Activated CD4-positive, alpha-beta memory T cell treated with anti-CD3 and anti-CD28 coated beads for 36 hours (primary cell): ENCODE measurements at regions of chr2 and their contacts with region 1.

Region 1: GRCh38 chr2:117814417-117815264 is at the start of gene DDX18:
- DNase-seq: peak; percentile 98
- H3K4me3 Mint-ChIP-seq: peak within 1 kb of the TSS; percentile 92
- H3K27ac Mint-ChIP-seq: peak within 1 kb of the TSS; percentile 95
- H3K4me1 Mint-ChIP-seq: peaks cover 35% of the 10 kb centered on the region
- H3K27me3 Mint-ChIP-seq: no peaks in the 10 kb centered on the region
- total RNA-seq, gene DDX18: 118 to 124 TPM

Region 2: DNA sequence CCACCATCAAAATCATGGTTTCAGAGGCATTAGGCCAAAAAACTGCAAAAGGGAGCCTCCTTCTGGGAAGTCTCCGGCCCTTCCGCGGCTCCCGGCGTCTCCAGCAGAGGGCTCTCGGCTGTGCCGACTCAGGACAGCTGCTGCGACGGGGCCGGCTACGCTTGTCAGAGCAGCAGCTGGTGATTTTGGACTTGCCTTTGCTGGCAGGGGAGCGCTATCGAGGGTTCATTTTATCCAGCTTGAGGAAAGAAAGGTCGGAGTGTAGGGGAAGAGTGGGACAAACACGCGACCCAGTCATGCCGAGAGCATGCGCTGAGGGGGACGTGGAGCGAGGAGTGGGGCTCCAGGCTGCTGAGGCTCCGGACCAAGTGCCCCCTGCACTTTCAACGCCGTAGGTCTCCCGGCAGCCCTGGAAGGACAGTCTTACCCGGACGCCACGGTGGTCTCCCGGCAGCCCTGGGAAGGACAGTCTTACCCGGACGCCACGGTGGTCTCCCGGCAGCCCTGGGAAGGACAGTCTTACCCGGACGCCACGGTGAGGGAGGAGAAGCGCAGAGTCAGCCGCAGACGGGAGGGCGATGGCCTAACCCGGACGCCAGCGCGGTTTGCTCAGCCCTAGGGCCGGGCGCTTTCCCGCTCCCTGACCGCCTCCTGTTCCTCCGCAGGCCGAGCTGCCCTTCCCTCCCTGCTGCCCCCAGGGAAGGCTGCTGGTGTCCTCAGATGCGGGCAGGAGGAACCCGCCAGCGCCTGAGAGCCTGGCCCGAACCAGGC is 21.5 kb after region 1 on chr2:
- CTCF ChIA-PET with region 1: interaction called, 17 read pairs
- POLR2A ChIA-PET with region 1: interaction called, 4 read pairs
- intact Hi-C with region 1: loop called (anchors 1 kb)
- DNase-seq: peak; percentile 68
- H3K4me3 Mint-ChIP-seq: peak overlapping the region; percentile 46
- H3K27ac Mint-ChIP-seq: no peak overlapping the region
- H3K4me1 Mint-ChIP-seq: peaks cover 13% of the 10 kb centered on the region
- H3K27me3 Mint-ChIP-seq: no peaks in the 10 kb centered on the region

Region 3: GRCh38 chr2:117856415-117857210 is 42.0 kb after region 1 on chr2:
- CTCF ChIA-PET with region 1: no interaction called
- POLR2A ChIA-PET with region 1: no interaction called
- intact Hi-C with region 1: no loop called
- DNase-seq: no peak
- H3K4me3 Mint-ChIP-seq: no peak overlapping the region
- H3K27ac Mint-ChIP-seq: no peak overlapping the region
- H3K4me1 Mint-ChIP-seq: no peaks in the 10 kb centered on the region
- H3K27me3 Mint-ChIP-seq: peaks cover 36% of the 10 kb centered on the region

Region 4: GRCh38 chr2:118013724-118014491 is 199.3 kb after region 1 on chr2 and contains the start of gene CCDC93:
- CTCF ChIA-PET with region 1: interaction called, 19 read pairs
- POLR2A ChIA-PET with region 1: interaction called, 5 read pairs
- intact Hi-C with region 1: loop called (anchors 1 kb)
- DNase-seq: peak; percentile 90
- H3K4me3 Mint-ChIP-seq: peak within 1 kb of the TSS; percentile 92
- H3K27ac Mint-ChIP-seq: peak within 1 kb of the TSS; percentile 80
- H3K4me1 Mint-ChIP-seq: peaks cover 36% of the 10 kb centered on the region
- H3K27me3 Mint-ChIP-seq: peaks cover 3% of the 10 kb centered on the region
- total RNA-seq, gene CCDC93: 24.9 to 27.3 TPM

Region 5: GRCh38 chr2:118112771-118113334 is 298.2 kb after region 1 on chr2:
- CTCF ChIA-PET with region 1: no interaction called
- POLR2A ChIA-PET with region 1: no interaction called
- intact Hi-C with region 1: no loop called
- DNase-seq: no peak
- H3K4me3 Mint-ChIP-seq: no peak overlapping the region
- H3K27ac Mint-ChIP-seq: no peak overlapping the region
- H3K4me1 Mint-ChIP-seq: peaks cover 7% of the 10 kb centered on the region
- H3K27me3 Mint-ChIP-seq: no peaks in the 10 kb centered on the region

Region 6: DNA sequence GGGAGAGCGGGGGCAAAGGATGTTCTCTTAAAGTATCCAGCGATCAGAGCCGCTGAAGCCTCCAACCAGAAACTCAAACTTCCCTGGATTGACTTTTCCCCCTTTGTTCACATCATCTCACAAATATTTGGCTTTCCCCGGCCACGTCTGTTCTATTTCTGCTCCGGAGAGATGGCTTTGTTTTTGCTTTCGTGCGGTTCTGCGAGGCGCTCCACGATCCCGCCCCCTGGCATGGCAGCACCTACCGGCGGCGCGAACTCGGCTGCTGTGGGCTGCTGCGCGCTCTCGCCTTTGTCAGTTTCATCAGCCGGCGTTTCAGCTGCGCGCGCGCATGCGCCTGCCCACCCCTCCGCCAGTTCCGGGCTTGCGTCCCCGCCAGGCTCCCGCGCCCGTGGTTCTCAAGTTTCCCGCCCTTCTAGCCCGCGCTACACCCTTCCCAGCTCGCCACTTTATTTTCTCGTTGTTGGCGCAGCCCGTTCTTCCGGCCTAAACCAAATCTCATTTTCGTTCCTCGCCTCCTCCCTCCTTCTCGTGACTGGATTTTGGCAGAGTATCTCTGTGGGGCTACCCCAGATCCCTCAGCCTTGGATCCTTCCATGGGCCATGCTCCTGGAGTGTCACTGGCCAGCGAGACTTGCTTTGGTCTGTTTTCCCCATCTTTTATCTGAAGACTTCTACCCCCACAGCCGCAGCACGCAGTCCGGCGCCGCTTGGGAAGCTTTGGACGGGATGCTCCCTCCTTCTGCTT is 371.6 kb after region 1 on chr2:
- CTCF ChIA-PET with region 1: interaction called, 4 read pairs
- POLR2A ChIA-PET with region 1: no interaction called
- intact Hi-C with region 1: loop called (anchors 1 kb)
- DNase-seq: peak; percentile 92
- H3K4me3 Mint-ChIP-seq: peak overlapping the region; percentile 93
- H3K27ac Mint-ChIP-seq: peak overlapping the region; percentile 94
- H3K4me1 Mint-ChIP-seq: peaks cover 11% of the 10 kb centered on the region
- H3K27me3 Mint-ChIP-seq: no peaks in the 10 kb centered on the region

Region 7: DNA sequence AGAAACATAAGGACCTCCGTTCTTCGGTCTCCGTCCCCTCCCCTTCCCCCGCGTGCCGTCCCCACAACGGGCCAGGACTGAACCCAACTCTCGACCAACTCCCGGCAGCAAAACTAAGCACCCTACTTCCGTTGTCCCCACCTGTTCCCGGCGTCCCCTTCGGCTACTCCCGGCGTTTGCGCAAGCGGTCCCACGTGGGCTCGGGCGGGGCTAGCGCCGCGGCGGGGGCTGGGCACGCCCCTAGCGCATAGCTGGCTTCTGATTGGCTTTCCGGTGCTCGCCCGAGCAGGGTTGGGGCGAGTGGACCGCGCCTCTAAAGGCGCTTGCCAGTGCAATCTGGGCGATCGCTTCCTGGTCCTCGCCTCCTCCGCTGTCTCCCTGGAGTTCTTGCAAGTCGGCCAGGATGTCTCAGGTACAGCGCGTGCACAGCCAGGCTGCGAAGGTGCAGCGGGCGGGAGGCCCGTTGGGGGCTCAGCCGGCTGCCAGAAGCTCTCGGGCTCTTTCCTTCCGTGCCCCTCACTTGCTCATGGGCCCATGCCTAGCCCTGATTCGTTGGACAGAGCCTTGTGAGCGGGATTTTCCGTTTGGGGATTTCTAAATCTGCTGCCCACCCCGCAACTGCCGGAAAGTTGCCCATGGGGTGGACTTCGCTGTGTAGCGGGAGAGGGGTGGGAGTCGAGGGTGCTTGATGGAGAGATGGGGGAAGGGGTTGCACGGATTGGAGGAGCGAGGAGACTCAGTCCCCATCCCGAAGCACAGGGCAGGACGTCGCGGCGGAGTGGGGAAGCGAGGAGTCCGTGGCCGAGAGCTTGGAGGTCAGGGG is 1552.2 kb after region 1 on chr2 and contains the starts of genes C2orf76 and DBI:
- CTCF ChIA-PET with region 1: no interaction called
- POLR2A ChIA-PET with region 1: no interaction called
- intact Hi-C with region 1: loop called (anchors 5 kb)
- DNase-seq: peak; percentile 96
- H3K4me3 Mint-ChIP-seq: peak within 1 kb of the TSS; percentile 100
- H3K27ac Mint-ChIP-seq: peak within 1 kb of the TSS; percentile 96
- H3K4me1 Mint-ChIP-seq: peaks cover 33% of the 10 kb centered on the region
- H3K27me3 Mint-ChIP-seq: no peaks in the 10 kb centered on the region
- total RNA-seq, gene C2orf76: 10.5 to 11.5 TPM
- total RNA-seq, gene DBI: 149 to 150 TPM